MCF 10A (cell line): ENCODE measurements at regions of chr21 and their contacts with region 1.

Region 1: GRCh38 chr21:21373969-21374368 is 375.8 kb downstream of the NCAM2 start:
- DNase-seq: peak; percentile 3
- H3K4me3 Mint-ChIP-seq: no peak overlapping the region
- H3K27ac Mint-ChIP-seq: no peak overlapping the region
- H3K4me1 Mint-ChIP-seq: no peaks in the 10 kb centered on the region
- H3K27me3 Mint-ChIP-seq: no peaks in the 10 kb centered on the region
- CTCF ChIP-seq: no peak

Region 2: GRCh38 chr21:21163904-21164303 is 210.1 kb before region 1 on chr21:
- CTCF ChIA-PET with region 1: interaction called, 3 read pairs
- POLR2A ChIA-PET with region 1: no interaction called
- intact Hi-C with region 1: loop called (anchors 2 kb)
- DNase-seq: peak; percentile 70
- H3K4me3 Mint-ChIP-seq: no peak overlapping the region
- H3K27ac Mint-ChIP-seq: no peak overlapping the region
- H3K4me1 Mint-ChIP-seq: no peaks in the 10 kb centered on the region
- H3K27me3 Mint-ChIP-seq: no peaks in the 10 kb centered on the region
- CTCF ChIP-seq: peak; percentile 48